ENCODE measurements at regions of chr18 and their contacts with region 1.

Region 1: DNA sequence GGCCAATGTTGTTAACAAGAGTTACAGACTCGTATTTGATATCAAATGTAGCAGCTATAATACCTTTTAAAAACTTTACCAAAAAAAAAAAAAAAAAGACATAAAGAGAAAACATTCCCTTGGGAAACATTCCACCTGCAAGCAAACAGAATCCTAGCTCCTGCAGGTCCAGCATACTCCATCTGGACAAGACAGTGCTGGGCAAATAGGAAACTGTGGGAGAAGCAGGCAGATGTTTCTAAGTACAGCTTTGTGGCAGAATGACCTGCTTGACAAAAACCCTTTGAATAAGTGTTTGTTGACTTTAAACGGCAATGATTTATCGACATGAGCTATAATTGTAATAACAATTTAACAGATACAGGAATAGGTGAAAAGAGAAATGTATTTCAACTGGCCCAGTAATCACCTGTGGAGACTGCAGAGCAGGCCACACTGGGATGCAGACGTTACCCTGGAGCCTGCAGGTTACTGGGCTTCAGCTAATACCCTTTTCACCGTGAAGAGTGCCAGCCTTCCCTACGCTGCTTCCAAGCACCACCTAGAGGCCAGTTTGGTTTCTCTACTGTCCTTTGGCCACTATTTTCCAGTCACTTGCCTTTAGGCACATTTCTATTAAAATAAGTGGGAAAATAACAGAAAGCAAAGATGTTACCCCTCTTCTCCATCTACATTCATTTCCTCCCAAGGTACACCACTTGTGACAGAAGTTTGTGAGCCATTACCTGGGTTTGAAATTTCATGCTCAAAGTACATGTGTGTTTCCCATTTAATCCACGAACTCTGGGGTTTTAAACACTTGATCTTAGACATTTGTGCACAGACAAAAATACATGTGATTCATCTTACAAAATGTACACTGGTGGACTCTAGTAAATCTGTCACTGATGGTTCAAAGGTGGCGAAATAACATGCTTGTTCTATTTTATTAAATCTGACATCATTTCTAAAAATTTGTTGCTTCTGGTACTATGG is 96.9 kb upstream of the ZNF397 start:
- DNase-seq: peak; percentile 60
- H3K4me3 Mint-ChIP-seq: no peak overlapping the region
- H3K27ac Mint-ChIP-seq: no peak overlapping the region
- H3K4me1 Mint-ChIP-seq: no peaks in the 10 kb centered on the region
- H3K27me3 Mint-ChIP-seq: no peaks in the 10 kb centered on the region
- CTCF ChIP-seq: peak; percentile 64

Region 2: GRCh38 chr18:33804258-33804657 is 1339.7 kb before region 1 on chr18:
- CTCF ChIA-PET with region 1: no interaction called
- intact Hi-C with region 1: no loop called
- DNase-seq: peak; percentile 57
- H3K4me3 Mint-ChIP-seq: no peak overlapping the region
- H3K27ac Mint-ChIP-seq: no peak overlapping the region
- H3K4me1 Mint-ChIP-seq: peaks cover 19% of the 10 kb centered on the region
- H3K27me3 Mint-ChIP-seq: no peaks in the 10 kb centered on the region
- CTCF ChIP-seq: no peak

Region 3: DNA sequence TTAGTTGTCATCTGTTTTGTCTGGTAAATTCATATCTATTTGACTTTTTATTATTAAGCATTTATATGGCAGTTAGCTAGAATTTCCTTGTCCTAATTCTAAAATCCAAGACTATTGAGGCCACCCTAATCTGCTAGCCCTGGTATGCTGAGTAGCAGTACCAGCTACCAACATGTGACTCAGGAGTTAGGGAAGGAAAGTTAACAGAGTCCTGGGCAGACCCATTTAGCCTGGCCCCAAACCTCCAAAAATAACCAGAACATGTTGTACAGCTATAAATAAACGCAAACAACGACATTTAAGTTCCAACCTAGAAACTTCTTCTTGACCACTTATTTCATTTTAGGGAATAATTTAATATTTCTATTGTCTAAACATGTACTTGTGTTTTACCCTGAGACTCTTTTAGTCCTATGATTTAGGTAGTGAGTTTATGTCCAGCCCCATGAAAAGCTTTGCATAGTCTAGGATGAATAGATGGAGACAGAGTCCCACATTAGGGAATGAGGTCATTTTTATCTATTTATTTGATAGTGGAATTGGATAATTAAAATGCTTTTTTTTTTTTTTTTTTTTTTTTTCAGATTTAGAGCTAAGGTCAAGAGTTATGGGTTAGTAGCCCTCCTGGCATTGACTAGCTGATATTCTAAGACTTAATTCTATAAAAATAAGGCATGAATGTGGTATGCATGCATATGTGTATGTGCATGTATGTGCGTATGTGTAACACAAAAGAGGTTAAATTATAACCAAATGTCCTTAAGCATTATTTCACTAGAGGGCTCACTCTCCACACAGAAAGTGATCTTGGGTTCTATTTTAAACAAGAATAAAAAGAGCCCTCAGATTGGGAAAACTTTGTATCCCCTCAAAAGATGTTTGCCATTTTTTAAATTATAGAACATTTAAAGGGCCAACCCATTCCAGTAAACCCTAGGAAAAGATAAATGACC is 262.8 kb before region 1 on chr18:
- CTCF ChIA-PET with region 1: no interaction called
- intact Hi-C with region 1: loop called (anchors 1 kb)
- DNase-seq: no peak
- H3K4me3 Mint-ChIP-seq: no peak overlapping the region
- H3K27ac Mint-ChIP-seq: no peak overlapping the region
- H3K4me1 Mint-ChIP-seq: no peaks in the 10 kb centered on the region
- H3K27me3 Mint-ChIP-seq: no peaks in the 10 kb centered on the region
- CTCF ChIP-seq: no peak